ENCODE measurements at regions of chr5 and their contacts with region 1.

Region 1: DNA sequence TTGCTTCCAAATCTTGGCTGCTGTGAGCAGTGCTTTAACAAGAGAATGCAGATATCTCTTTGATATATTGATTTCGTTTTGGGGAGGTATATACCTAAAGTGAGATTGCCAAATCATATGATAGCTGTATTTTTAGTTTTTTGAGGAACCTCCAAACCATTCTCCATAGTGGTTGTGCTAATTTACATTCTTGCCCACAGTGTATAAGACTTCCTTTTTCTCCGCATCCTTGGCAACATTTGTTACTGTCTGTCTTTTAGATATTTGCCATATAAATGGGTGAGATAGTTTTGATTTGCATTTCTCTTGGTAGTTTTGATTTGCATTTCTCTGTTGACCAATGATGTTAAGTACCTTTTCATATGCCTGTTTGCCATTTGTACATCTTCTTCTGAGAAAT is 10.0 kb upstream of the PLK2 start:
- DNase-seq: no peak
- H3K4me3 ChIP-seq: no peak overlapping the region
- H3K27ac ChIP-seq: no peak overlapping the region
- H3K27me3 ChIP-seq: peaks cover 0 to 3% (median 0%) of the 10 kb centered on the region in 45 donors
- CTCF ChIP-seq: no peak

Region 2: GRCh38 chr5:57221049-57221568 is 1248.8 kb before region 1 on chr5:
- intact Hi-C with region 1: no loop called
- DNase-seq: no peak
- H3K4me3 ChIP-seq: no peak overlapping the region
- H3K27ac ChIP-seq: peak overlapping the region in 2 of 59 donors; percentile 5 to 11
- H3K27me3 ChIP-seq: no peaks in the 10 kb centered on the region
- CTCF ChIP-seq: peak; percentile 71 to 99 (median 90)

Region 3: DNA sequence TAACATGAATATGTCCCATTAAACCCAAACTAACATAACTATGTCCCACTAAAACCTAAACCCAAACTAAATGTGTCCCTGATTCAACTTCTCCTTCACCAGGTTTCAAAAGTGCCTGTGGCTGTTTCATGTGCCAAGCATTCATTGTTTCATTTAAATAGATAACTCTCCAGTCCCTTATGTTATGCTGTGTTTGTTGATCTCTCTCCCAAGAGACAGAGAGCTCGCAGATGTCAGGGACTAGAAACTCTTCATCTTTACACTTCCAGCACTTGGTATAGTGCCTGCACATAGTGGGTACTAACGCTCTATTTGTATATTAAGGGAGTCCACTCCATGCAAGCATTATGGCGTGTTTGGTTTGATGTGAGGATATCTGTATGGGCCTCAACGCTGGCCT is 1178.0 kb before region 1 on chr5:
- intact Hi-C with region 1: loop called in 1 of 2 experiments (anchors 2 kb)
- DNase-seq: no peak
- H3K4me3 ChIP-seq: no peak overlapping the region
- H3K27ac ChIP-seq: no peak overlapping the region
- H3K27me3 ChIP-seq: no peaks in the 10 kb centered on the region
- CTCF ChIP-seq: no peak

Region 4: GRCh38 chr5:58300361-58300895 is 169.5 kb before region 1 on chr5:
- intact Hi-C with region 1: no loop called
- DNase-seq: no peak
- H3K4me3 ChIP-seq: no peak overlapping the region
- H3K27ac ChIP-seq: peak overlapping the region in 41 of 59 donors; percentile 1 to 79 (median 33)
- H3K27me3 ChIP-seq: no peaks in the 10 kb centered on the region
- CTCF ChIP-seq: no peak

Measured in dorsolateral prefrontal cortex (tissue), 120 donors.